GM10248 (cell line): ENCODE measurements at regions of chr5 and their contacts with region 1.

Region 1: DNA sequence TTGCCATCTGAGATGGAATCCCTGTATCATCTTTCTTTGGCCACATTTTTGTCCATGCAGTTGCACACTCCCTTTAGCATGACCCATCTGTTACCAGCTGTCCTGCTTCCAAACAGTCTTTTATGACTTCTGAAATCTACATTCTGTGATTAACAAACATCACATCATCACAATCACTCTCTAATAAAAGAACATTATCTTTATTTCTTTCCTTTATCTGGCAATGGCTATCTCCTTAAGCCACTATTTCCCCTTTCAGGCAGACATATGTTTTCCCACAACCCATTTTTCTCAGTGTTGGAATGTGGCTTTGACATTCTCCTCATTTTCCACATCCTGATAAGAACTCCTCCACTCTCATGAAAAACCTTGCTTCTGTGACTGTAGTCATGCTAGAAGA is 141.0 kb downstream of the ST8SIA4 start:
- DNase-seq: no peak
- CTCF ChIP-seq: no peak

Region 2: DNA sequence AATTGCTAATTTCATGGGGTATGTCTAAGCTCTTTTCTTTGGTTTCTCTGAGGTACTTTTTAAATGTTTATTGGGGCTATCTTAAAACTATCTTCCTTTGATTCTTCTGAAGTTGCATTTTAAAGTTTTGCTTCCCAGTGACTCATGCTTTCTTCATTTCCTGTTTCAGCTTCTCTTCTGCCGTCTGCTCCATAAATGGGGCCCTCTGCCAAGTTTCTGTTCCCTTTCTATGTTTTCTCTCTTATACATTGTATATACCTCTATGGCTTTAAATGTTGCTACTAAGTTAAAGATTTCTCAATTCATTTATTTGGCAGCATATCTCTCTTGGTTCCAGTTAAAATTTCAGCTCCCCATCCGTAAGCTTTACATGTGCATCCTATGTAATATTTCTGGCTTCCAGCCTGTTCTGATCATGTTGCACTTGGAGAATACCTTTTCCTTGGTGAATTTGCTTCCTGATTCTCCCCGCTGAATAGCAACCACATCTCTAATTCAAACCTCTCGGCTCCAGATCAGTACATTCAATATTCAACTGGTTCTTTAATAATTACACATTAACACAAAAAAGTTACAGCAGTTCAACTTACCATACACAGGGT is 15.7 kb after region 1 on chr5:
- CTCF ChIA-PET with region 1: interaction called, 22 read pairs
- POLR2A ChIA-PET with region 1: no interaction called
- DNase-seq: peak; percentile 41
- CTCF ChIP-seq: no peak